Activated naive CD4-positive, alpha-beta T cell treated with anti-CD3 and anti-CD28 coated beads for 36 hours (primary cell): ENCODE measurements at regions of chr9 and their contacts with region 1.

Region 1: GRCh38 chr9:135907431-135908092 is at the start of gene CAMSAP1:
- DNase-seq: peak; percentile 94
- H3K4me3 Mint-ChIP-seq: peak within 1 kb of the TSS; percentile 80
- H3K27ac Mint-ChIP-seq: peak within 1 kb of the TSS; percentile 89
- H3K4me1 Mint-ChIP-seq: peaks cover 53% of the 10 kb centered on the region
- H3K27me3 Mint-ChIP-seq: no peaks in the 10 kb centered on the region
- total RNA-seq, gene CAMSAP1: 32.6 to 35.2 TPM

Region 2: GRCh38 chr9:135864447-135865049 is 43.0 kb before region 1 on chr9:
- CTCF ChIA-PET with region 1: interaction called, 7 read pairs
- intact Hi-C with region 1: loop called (anchors 2 kb)
- DNase-seq: peak; percentile 84
- H3K4me3 Mint-ChIP-seq: no peak overlapping the region
- H3K27ac Mint-ChIP-seq: no peak overlapping the region
- H3K4me1 Mint-ChIP-seq: peaks cover 21% of the 10 kb centered on the region
- H3K27me3 Mint-ChIP-seq: no peaks in the 10 kb centered on the region

Region 3: GRCh38 chr9:135926402-135927194 is 19.0 kb after region 1 on chr9:
- CTCF ChIA-PET with region 1: interaction called, 4 read pairs
- intact Hi-C with region 1: loop called (anchors 1 kb)
- DNase-seq: peak; percentile 92
- H3K4me3 Mint-ChIP-seq: no peak overlapping the region
- H3K27ac Mint-ChIP-seq: peak overlapping the region; percentile 85
- H3K4me1 Mint-ChIP-seq: peaks cover 31% of the 10 kb centered on the region
- H3K27me3 Mint-ChIP-seq: no peaks in the 10 kb centered on the region

Region 4: GRCh38 chr9:135951889-135952663 is 44.5 kb after region 1 on chr9:
- CTCF ChIA-PET with region 1: no interaction called
- intact Hi-C with region 1: no loop called
- DNase-seq: no peak
- H3K4me3 Mint-ChIP-seq: no peak overlapping the region
- H3K27ac Mint-ChIP-seq: no peak overlapping the region
- H3K4me1 Mint-ChIP-seq: peaks cover 4% of the 10 kb centered on the region
- H3K27me3 Mint-ChIP-seq: no peaks in the 10 kb centered on the region

Region 5: GRCh38 chr9:136363606-136364370 is 456.2 kb after region 1 on chr9 and contains the start of gene DNLZ:
- CTCF ChIA-PET with region 1: no interaction called
- intact Hi-C with region 1: loop called (anchors 2 kb)
- DNase-seq: peak; percentile 86
- H3K4me3 Mint-ChIP-seq: peak within 1 kb of the TSS; percentile 84
- H3K27ac Mint-ChIP-seq: peak within 1 kb of the TSS; percentile 89
- H3K4me1 Mint-ChIP-seq: peaks cover 5% of the 10 kb centered on the region
- H3K27me3 Mint-ChIP-seq: no peaks in the 10 kb centered on the region
- total RNA-seq, gene DNLZ: 9.9 to 12.0 TPM